ENCODE measurements at regions of chr3 and their contacts with region 1.

Region 1: DNA sequence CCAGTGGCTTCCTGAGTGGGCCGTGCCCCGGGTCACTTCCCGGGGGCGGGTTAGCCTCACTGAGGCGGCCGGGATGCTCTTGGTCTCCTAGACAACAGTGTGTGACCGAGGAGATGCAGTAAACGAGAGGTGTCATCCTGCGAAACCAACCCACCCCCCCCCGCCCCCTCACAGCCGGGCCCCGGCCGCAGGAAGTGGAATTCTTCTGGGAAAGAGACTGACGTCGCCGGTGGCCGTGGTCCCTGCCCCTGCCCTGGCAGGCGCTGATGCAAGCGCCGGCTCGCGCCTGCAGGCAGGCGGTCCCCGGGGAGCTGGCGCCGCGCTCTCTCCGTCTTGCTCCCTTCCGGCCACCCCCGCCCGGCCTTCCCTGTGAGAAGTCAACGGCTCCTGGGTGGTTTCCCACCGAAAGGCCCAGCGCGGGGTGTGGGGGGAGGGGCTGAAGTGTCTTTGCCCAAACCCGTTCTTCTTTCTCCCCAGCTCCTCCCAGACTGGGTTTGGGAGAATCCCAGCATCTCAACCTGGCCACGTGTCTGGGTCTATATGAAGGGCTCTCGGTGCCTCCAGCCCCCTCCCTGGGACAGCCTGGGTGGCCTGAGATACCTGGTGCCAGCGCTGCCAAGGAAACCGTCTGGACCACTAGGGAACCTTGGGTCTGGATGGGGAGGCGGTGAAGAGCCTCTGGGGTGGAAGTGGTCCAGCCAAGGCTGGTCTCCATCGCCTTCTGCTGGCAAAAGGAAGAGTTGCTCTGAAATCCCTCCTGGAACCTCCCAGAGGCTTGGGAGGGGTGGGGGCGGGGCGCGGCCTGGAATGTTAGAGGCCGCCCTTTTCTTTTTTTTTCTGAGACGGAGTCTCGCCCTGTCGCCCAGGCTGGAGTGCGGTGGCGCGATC is 47.3 kb downstream of the BHLHE40 start:
- DNase-seq: peak; percentile 84
- H3K4me3 Mint-ChIP-seq: peak overlapping the region; percentile 79
- H3K27ac Mint-ChIP-seq: peak overlapping the region; percentile 88
- H3K4me1 Mint-ChIP-seq: peaks cover 51% of the 10 kb centered on the region
- H3K27me3 Mint-ChIP-seq: no peaks in the 10 kb centered on the region

Region 2: DNA sequence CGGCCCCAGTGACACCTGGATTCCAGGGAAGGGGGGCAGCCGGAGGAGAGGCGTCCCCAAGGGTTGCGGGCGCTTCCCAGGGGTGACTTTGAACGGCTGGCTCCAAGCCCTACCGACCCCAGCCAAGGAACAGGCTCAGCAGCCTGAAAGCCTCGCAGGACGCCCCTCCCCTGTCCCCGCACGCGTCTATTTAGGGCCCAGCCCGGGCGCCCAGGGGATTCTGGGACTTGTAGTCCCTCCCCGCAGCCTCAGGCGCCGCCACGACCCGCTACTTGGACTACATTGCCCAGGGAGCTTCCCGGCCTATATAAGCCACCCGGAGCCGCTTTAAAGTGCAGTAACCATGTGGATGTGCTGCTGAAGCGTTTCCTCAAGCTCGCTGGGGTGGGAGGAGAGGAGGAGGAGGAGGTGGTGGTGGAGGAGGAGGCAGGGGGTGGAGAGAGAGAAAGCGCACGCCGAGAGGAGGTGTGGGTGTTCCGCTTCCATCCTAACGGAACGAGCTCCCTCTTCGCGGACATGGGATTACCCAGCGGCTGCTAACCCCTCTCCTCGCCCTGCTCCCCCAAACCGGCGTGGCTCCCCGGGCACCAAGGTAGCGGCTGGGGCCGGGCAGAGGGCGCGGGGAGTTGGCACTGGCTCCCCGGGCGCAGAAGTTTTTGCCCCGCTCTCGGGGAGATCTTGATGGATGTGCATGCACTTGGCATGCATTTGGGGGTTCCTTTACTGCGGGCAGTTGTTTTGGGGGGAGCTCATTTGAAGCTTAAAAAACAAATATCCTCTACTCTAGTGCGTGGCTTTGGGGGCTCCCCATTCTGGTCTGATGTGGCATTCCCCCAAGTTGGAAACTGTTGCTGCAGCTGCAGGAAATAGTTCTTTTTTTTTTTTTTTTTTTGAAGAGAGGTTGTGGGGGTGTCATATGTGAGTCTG is 533.3 kb before region 1 on chr3 and contains the start of gene ITPR1:
- CTCF ChIA-PET with region 1: no interaction called
- POLR2A ChIA-PET with region 1: no interaction called
- intact Hi-C with region 1: loop called (anchors 5 kb)
- DNase-seq: peak; percentile 98
- H3K4me3 Mint-ChIP-seq: peak within 1 kb of the TSS; percentile 91
- H3K27ac Mint-ChIP-seq: peak within 1 kb of the TSS; percentile 79
- H3K4me1 Mint-ChIP-seq: peaks cover 41% of the 10 kb centered on the region
- H3K27me3 Mint-ChIP-seq: peaks cover 5% of the 10 kb centered on the region
- total RNA-seq, gene ITPR1: 49.1 to 53.1 TPM

Region 3: DNA sequence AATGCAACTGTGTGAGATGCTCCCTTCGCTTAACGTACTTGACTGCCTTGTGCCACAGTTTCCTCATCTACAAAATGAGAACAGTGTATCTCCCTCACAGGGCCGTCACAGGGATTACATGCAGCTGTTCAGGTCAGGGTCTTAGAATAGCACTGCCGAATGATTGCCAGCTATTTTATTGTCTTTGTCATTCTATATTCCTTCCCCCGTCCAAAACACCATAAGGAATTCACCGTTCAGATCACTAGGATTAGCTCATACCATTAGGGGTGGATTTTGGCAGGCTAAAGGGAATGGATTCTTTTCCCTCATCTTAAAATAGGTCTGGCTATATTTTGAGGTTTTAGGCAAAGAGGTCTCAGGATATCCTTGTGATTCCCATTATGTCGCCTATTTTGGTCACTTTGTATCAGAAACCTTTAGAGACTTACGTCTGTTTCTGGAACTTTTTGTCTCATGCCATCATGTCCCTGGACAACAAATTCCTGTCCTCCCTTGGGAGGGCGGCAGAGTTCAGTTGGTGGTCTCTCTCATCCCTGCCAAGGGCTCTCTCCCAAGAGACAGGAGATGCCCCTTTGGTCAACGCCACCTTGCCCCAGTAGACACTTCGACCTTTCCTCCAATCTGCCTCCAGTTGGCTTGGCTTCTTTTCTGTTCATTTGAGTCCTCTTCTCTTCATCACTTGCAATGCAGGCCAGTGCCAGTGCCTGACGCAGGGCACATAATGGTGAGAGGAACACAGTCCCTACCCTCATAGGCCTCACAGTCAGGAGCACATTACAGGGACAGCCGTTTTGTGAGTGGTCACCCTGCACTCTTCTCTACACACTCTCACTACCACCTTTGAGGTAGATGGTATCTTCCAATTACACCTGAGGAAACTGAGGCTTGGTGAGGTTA is 218.9 kb before region 1 on chr3:
- CTCF ChIA-PET with region 1: interaction called, 3 read pairs
- POLR2A ChIA-PET with region 1: interaction called, 4 read pairs
- intact Hi-C with region 1: loop called (anchors 1 kb)
- DNase-seq: no peak
- H3K4me3 Mint-ChIP-seq: peak overlapping the region; percentile 45
- H3K27ac Mint-ChIP-seq: peak overlapping the region; percentile 4
- H3K4me1 Mint-ChIP-seq: peaks cover 42% of the 10 kb centered on the region
- H3K27me3 Mint-ChIP-seq: no peaks in the 10 kb centered on the region

Region 4: GRCh38 chr3:4850928-4851265 is 175.7 kb before region 1 on chr3:
- CTCF ChIA-PET with region 1: interaction called, 3 read pairs
- POLR2A ChIA-PET with region 1: interaction called, 14 read pairs
- intact Hi-C with region 1: loop called (anchors 1 kb)
- DNase-seq: peak; percentile 43
- H3K4me3 Mint-ChIP-seq: peak overlapping the region; percentile 53
- H3K27ac Mint-ChIP-seq: peak overlapping the region; percentile 88
- H3K4me1 Mint-ChIP-seq: peaks cover 88% of the 10 kb centered on the region
- H3K27me3 Mint-ChIP-seq: no peaks in the 10 kb centered on the region

Region 5: DNA sequence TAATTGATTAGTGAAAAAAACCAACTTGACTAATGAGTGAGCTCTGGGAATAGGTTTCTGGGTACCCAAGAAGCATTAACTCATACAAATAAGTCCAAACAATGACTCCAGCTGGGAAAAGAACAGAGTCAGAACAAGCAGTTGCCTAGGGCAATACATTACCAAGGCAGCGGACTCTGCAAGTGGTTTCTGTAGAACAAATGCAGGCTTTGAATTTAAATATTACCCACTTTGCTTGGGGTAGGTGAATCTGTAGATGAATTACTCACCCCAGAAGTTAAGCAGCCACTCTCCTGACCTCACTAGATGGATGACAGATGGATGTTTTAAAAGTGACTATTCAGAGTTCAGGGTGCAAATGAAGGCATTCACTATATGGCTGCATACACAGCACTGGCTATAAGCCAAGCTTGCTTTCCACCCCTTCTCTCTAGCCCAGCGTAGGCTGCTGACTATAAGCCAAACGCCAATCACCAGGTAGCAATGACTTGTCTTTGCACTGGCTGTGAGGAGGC is 120.4 kb before region 1 on chr3:
- CTCF ChIA-PET with region 1: no interaction called
- POLR2A ChIA-PET with region 1: interaction called, 13 read pairs
- intact Hi-C with region 1: loop called (anchors 1 kb)
- DNase-seq: peak; percentile 72
- H3K4me3 Mint-ChIP-seq: no peak overlapping the region
- H3K27ac Mint-ChIP-seq: peak overlapping the region; percentile 72
- H3K4me1 Mint-ChIP-seq: peaks cover 70% of the 10 kb centered on the region
- H3K27me3 Mint-ChIP-seq: no peaks in the 10 kb centered on the region

Region 6: GRCh38 chr3:5016218-5017161 is 10.1 kb before region 1 on chr3:
- CTCF ChIA-PET with region 1: interaction called, 6 read pairs
- POLR2A ChIA-PET with region 1: interaction called, 11 read pairs
- intact Hi-C with region 1: no loop called
- DNase-seq: peak; percentile 69
- H3K4me3 Mint-ChIP-seq: no peak overlapping the region
- H3K27ac Mint-ChIP-seq: peak overlapping the region; percentile 66
- H3K4me1 Mint-ChIP-seq: peaks cover 77% of the 10 kb centered on the region
- H3K27me3 Mint-ChIP-seq: no peaks in the 10 kb centered on the region

Region 7: DNA sequence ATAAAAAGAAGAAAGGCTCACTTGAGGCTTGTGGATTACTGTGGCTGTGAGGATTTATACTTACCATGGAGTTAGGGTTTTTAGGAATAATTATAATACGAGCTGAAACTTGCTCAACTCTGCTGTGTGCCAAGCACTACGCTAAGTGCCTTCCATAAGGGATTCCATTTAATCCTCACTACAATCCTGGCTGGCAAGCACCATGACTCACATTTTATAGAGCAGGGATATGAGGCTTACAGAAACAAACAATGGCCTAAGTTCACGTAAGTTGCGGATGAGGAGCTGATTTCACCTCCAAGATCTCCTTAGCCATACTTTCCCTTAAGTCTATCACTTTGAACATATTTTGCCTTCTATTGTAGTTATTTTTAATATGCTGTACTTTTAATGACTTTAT is 51.6 kb after region 1 on chr3:
- CTCF ChIA-PET with region 1: no interaction called
- POLR2A ChIA-PET with region 1: no interaction called
- intact Hi-C with region 1: no loop called
- DNase-seq: no peak
- H3K4me3 Mint-ChIP-seq: no peak overlapping the region
- H3K27ac Mint-ChIP-seq: no peak overlapping the region
- H3K4me1 Mint-ChIP-seq: no peaks in the 10 kb centered on the region
- H3K27me3 Mint-ChIP-seq: peaks cover 2% of the 10 kb centered on the region

Region 8: GRCh38 chr3:5194341-5195159 is 168.0 kb after region 1 on chr3:
- CTCF ChIA-PET with region 1: no interaction called
- POLR2A ChIA-PET with region 1: no interaction called
- intact Hi-C with region 1: loop called (anchors 2 kb)
- DNase-seq: peak; percentile 62
- H3K4me3 Mint-ChIP-seq: peak overlapping the region; percentile 66
- H3K27ac Mint-ChIP-seq: peak overlapping the region; percentile 98
- H3K4me1 Mint-ChIP-seq: peaks cover 85% of the 10 kb centered on the region
- H3K27me3 Mint-ChIP-seq: no peaks in the 10 kb centered on the region